ENCODE measurements at regions of chr13 and their contacts with region 1.

Region 1: GRCh38 chr13:28159057-28159456 is 20.7 kb downstream of the PAN3 start:
- DNase-seq: no peak
- ATAC-seq: no peak
- H3K4me3 ChIP-seq: no peak overlapping the region
- H3K4me3 Mint-ChIP-seq: no peak overlapping the region
- H3K27ac ChIP-seq: no peak overlapping the region
- H3K27ac Mint-ChIP-seq: no peak overlapping the region
- H3K4me1 ChIP-seq: peaks cover 0 to 16% of the 10 kb centered on the region in 2 experiments
- H3K4me1 Mint-ChIP-seq: peaks cover 62 to 70% (median 68%) of the 10 kb centered on the region in 3 donors
- H3K27me3 ChIP-seq: no peaks in the 10 kb centered on the region
- H3K27me3 Mint-ChIP-seq: no peaks in the 10 kb centered on the region

Region 2: GRCh38 chr13:28052945-28053344 is 106.1 kb before region 1 on chr13:
- CTCF ChIA-PET with region 1: no interaction called
- POLR2A ChIA-PET with region 1: interaction called in 1 of 2 experiments, 10 read pairs
- DNase-seq: no peak
- ATAC-seq: no peak
- H3K4me3 ChIP-seq: no peak overlapping the region
- H3K4me3 Mint-ChIP-seq: no peak overlapping the region
- H3K27ac ChIP-seq: no peak overlapping the region
- H3K27ac Mint-ChIP-seq: no peak overlapping the region
- H3K4me1 ChIP-seq: no peaks in the 10 kb centered on the region
- H3K4me1 Mint-ChIP-seq: peaks cover 0 to 16% (median 8%) of the 10 kb centered on the region in 3 donors
- H3K27me3 ChIP-seq: peaks cover 0 to 15% of the 10 kb centered on the region in 2 experiments
- H3K27me3 Mint-ChIP-seq: peaks cover 17 to 22% of the 10 kb centered on the region in 2 donors

Region 3: GRCh38 chr13:28179974-28180373 is 20.9 kb after region 1 on chr13:
- CTCF ChIA-PET with region 1: no interaction called
- POLR2A ChIA-PET with region 1: no interaction called
- DNase-seq: no peak
- ATAC-seq: no peak
- H3K4me3 ChIP-seq: no peak overlapping the region
- H3K4me3 Mint-ChIP-seq: no peak overlapping the region
- H3K27ac ChIP-seq: no peak overlapping the region
- H3K27ac Mint-ChIP-seq: no peak overlapping the region
- H3K4me1 ChIP-seq: peaks cover 0 to 6% of the 10 kb centered on the region in 2 experiments
- H3K4me1 Mint-ChIP-seq: peaks cover 43 to 67% (median 48%) of the 10 kb centered on the region in 3 donors
- H3K27me3 ChIP-seq: no peaks in the 10 kb centered on the region
- H3K27me3 Mint-ChIP-seq: no peaks in the 10 kb centered on the region

Region 4: DNA sequence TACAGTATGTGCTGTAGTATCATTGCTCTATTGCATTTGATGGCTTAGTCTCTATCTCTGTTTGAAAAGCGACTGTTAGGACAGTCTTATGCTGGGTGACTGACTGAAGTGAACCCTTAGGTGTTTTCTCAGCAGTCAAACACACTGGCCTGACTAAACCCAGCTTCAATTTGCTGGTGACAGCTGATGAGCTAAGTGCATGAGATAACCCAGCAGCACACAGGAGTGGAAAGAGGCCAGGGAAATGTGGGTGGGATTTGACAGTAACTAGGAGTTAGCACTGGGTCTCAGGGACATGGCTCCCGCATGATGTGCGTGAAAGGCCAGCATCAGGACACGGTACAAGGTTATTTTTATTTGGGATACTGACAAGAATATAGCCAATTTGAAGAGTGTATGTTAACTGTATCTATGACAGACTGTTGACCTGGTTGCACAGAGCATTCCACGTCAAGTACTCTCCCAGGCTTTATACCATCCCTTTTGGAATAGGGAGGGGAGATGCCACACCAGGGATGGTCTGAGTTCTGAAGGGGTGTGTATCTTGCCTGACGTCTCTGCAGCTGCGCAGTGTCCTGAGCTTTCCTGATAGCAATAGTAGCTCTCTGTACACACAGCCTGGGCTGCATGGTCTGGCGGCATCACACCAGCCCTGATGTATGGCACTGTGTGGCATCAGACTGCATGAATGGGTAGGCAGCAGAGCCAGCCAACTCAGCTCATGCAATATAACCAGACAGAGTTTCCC is 191.0 kb after region 1 on chr13:
- CTCF ChIA-PET with region 1: no interaction called
- POLR2A ChIA-PET with region 1: no interaction called
- DNase-seq: no peak
- ATAC-seq: no peak
- H3K4me3 ChIP-seq: no peak overlapping the region
- H3K4me3 Mint-ChIP-seq: no peak overlapping the region
- H3K27ac ChIP-seq: no peak overlapping the region
- H3K27ac Mint-ChIP-seq: no peak overlapping the region
- H3K4me1 ChIP-seq: peaks cover 4 to 16% of the 10 kb centered on the region in 2 experiments
- H3K4me1 Mint-ChIP-seq: peaks cover 18 to 29% (median 26%) of the 10 kb centered on the region in 3 donors
- H3K27me3 ChIP-seq: peaks cover 0 to 5% of the 10 kb centered on the region in 2 experiments
- H3K27me3 Mint-ChIP-seq: peaks cover 0 to 5% of the 10 kb centered on the region in 2 donors